ENCODE measurements at regions of chr5 and their contacts with region 1.

Region 1: DNA sequence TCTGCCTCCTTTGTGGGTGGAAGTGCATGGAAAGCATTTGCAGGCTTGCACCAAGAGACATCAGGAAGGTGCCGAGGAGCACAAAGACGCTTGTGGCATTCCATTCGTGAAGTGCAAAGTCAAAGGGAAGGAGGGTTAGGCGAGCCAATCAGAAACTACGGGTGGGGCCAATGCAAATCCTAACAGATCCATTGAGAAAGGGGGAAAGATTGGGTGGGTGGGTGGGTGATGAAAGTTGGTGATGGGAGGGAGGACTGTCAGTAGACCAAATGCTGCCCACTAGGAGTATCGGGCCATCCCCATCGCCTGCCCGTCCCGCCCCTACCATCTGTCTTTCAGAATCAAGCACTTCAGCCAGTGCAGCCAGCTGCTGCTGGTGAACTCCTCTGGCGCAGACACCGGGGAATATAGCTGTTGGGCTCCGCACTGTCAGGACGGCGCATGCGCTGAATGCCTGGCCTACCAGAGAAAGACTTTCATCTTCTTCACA is 17.1 kb upstream of the ANXA6 start:
- DNase-seq: no peak
- H3K4me3 ChIP-seq: no peak overlapping the region
- H3K27ac ChIP-seq: peak overlapping the region in 1 of 4 donors; percentile 16
- H3K4me1 ChIP-seq: no peaks in the 10 kb centered on the region
- H3K27me3 ChIP-seq: no peaks in the 10 kb centered on the region
- CTCF ChIP-seq: no peak
- EP300 ChIP-seq: no peak
- POLR2A ChIP-seq: no peak

Region 2: DNA sequence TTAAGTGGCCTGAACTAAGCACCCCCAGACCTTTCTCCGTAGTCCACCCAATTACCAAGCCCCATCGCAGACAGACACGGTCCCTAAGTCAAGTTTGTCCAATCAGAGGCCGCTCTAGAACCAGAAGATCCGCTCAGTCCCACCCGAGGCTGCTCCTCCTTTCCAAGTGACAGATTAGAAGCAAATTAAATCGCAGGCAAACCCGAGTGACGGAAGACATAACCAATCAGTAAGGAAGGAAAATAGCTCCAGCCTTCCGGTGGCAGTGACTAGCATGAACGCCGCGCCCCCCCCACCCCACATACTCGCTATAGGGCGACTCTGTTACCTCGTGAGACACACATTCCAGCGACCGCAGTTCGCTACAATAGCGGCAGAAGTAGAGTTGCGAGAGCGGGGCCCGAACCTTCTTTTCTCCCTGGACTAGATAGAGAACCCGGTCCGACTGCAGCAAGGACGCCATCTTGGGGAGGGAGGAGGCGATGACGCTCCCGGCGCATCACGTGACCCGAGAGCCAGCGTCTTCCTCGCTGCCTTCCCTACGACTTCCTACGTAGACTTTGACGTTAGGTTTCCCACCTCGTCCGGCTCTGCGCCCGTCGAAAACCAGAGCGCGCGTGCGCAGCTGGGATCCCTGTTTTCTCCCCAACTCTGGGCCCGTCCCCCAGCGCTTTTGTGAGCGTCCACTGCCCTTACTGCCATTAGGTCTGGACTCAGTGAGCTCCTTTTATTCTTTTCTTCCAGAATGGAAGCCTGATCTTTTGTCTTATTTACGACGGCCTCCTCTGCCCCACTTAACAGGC is 415.9 kb before region 1 on chr5 and contains the start of gene DCTN4:
- in situ Hi-C with region 1: no loop called
- intact Hi-C with region 1: no loop called
- DNase-seq: peak; percentile 96
- H3K4me3 ChIP-seq: peak within 1 kb of the TSS; percentile 54 to 60 (median 56)
- H3K27ac ChIP-seq: peak within 1 kb of the TSS; percentile 90 to 95 (median 94)
- H3K4me1 ChIP-seq: peaks cover 8 to 37% (median 18%) of the 10 kb centered on the region in 4 donors
- H3K27me3 ChIP-seq: no peaks in the 10 kb centered on the region
- CTCF ChIP-seq: peak in 1 of 5 experiments; percentile 16
- EP300 ChIP-seq: no peak
- POLR2A ChIP-seq: peak; percentile 47
- total RNA-seq, gene DCTN4: 23.2 to 55.3 (median 42.4) TPM

Region 3: DNA sequence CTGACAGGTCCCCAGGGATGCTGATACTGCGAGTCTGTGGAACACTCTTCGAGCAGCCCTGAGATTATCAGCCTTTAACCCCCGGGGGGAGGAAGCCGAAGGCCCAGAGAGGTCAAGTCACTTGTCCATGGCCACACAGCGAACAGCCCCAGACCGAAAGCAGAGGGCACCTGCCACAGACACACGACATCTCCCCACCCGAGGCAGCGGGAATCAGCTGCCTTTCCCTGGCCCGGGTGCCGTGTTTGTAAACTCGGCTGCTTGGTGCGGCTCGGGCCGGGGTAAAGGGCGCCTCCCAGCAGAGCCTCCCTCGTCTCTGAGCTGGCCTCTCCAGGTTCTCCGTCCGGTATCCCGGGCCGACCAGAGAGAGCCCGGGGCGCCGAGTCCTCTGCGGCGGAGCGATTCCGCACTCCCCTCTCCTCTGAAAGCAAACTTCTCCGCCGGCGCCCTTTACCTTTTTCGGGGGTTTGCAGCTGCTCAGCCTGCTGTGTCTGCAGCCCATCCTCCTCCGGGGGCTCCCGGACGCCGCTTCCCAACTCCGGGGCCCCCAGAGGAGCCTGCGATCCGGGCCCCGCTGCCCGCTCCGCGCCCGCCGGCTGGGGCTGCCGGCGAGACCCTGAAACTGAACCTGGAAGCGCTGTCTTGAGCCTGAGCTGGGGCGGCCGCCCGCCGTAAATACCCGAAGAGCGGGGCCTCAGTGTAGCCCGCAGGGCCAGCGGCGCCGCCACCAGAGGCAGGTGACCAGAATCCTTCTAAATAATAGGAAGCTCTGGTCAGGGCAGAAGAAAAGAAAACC is 49.0 kb after region 1 on chr5 and contains the start of gene CCDC69:
- in situ Hi-C with region 1: no loop called
- intact Hi-C with region 1: loop called (anchors 5 kb)
- DNase-seq: peak; percentile 81
- H3K4me3 ChIP-seq: peak within 1 kb of the TSS; percentile 72 to 86 (median 74)
- H3K27ac ChIP-seq: peak within 1 kb of the TSS; percentile 85 to 95 (median 92)
- H3K4me1 ChIP-seq: peaks cover 4 to 44% (median 30%) of the 10 kb centered on the region in 4 donors
- H3K27me3 ChIP-seq: no peaks in the 10 kb centered on the region
- CTCF ChIP-seq: peak in 3 of 5 experiments; percentile 17 to 37 (median 21)
- EP300 ChIP-seq: no peak
- POLR2A ChIP-seq: peak; percentile 70
- total RNA-seq, gene CCDC69: 37.7 to 89.2 (median 62.1) TPM